Activated naive CD4-positive, alpha-beta T cell treated with anti-CD3 and anti-CD28 coated beads, Interleukin-2, amount 10 ng/mL, durations not matched to agents 7 days and 5 days (primary cell): ENCODE measurements at regions of chr1 and their contacts with region 1.

Region 1: GRCh38 chr1:160837558-160838205 is 25.0 kb downstream of the CD244 start:
- DNase-seq: peak; percentile 93
- H3K4me3 Mint-ChIP-seq: peak overlapping the region; percentile 13
- H3K27ac Mint-ChIP-seq: peak overlapping the region; percentile 96
- H3K4me1 Mint-ChIP-seq: peaks cover 65% of the 10 kb centered on the region
- H3K27me3 Mint-ChIP-seq: peaks cover 12% of the 10 kb centered on the region

Region 2: DNA sequence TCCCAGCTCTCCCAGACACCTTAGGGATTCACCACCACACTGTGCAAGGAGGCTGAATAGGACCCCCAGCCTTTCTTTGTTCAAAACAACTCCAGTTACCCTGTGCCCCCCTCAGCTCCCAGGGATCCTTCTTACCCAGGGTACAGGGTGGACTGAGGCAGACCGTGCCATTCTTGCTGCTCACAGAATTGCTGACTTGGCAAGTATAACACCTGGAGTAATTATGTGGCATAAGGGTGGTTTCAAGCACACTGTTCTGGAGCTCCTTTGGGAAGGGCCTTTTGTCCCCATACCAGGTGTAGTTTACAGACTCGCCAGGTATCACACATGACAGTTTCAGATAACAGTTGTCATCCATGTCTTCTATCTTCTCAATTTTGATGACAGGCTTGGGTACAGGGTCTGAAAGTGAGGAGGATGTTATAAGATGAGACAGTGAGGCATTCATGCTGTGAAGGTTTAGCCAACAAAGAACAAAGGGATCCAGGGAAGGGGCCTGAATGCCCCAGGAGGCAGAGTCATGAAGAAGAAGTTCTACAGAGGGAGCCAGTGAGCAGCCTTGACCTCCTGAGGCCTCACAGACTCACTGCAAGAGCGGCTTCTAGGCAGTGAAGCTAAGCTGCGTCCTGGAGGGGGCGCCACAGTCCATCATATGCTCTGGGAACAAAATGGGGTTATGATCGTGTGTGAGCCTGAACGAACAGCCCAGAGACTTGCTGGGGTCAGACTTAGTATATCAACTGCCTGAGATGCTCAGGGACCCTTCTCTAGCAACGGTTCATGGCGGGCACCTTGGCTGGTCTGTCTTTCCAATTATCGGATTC is 156.4 kb before region 1 on chr1:
- CTCF ChIA-PET with region 1: interaction called, 16 read pairs
- DNase-seq: peak; percentile 93
- H3K4me3 Mint-ChIP-seq: no peak overlapping the region
- H3K27ac Mint-ChIP-seq: peak overlapping the region; percentile 96
- H3K4me1 Mint-ChIP-seq: peaks cover 74% of the 10 kb centered on the region
- H3K27me3 Mint-ChIP-seq: no peaks in the 10 kb centered on the region

Region 3: GRCh38 chr1:160768295-160768657 is 69.4 kb before region 1 on chr1:
- CTCF ChIA-PET with region 1: interaction called, 37 read pairs
- DNase-seq: peak; percentile 93
- H3K4me3 Mint-ChIP-seq: peak overlapping the region; percentile 67
- H3K27ac Mint-ChIP-seq: peak overlapping the region; percentile 96
- H3K4me1 Mint-ChIP-seq: peaks cover 31% of the 10 kb centered on the region
- H3K27me3 Mint-ChIP-seq: no peaks in the 10 kb centered on the region

Region 4: DNA sequence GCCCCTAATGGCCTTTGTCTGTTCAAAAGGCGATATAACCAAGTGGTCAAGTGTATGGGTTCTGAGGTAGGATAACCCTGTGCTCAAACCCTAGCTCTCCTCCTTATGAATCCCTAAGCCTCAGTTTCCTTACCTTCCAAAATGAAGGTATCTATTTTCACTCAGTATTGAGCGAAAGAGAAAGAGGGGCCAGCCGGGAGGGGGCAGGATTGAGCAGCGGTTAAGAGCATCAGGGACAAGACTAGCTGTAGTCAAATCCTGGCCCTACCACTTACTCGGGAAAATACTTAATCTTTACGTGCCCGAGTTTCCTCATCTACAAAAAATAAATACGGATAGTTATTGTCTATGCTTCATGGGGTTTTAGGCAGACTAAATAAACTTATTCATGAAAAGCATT is 16.1 kb before region 1 on chr1:
- CTCF ChIA-PET with region 1: interaction called, 13 read pairs
- DNase-seq: no peak
- H3K4me3 Mint-ChIP-seq: no peak overlapping the region
- H3K27ac Mint-ChIP-seq: no peak overlapping the region
- H3K4me1 Mint-ChIP-seq: peaks cover 2% of the 10 kb centered on the region
- H3K27me3 Mint-ChIP-seq: no peaks in the 10 kb centered on the region

Region 5: DNA sequence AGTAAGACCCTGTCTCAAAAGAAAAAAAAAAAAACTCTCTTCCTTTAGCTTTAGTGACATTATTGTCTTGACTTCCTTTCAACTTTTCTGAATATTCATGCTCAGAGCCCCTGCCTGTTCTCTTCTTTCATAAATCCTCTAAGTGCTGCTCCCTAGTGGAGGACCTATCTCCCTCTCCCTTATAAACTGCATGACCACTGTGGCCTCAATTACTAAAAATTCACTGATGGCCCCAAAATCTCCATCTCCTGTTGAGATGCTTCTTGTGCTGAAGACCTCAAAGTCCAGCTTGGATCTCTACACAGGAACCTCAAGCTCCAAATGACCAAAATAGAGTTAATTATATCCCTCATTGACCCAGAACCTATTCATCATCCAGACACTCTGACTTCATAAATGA is 39.5 kb after region 1 on chr1:
- CTCF ChIA-PET with region 1: interaction called, 44 read pairs
- DNase-seq: peak; percentile 29
- H3K4me3 Mint-ChIP-seq: no peak overlapping the region
- H3K27ac Mint-ChIP-seq: no peak overlapping the region
- H3K4me1 Mint-ChIP-seq: peaks cover 5% of the 10 kb centered on the region
- H3K27me3 Mint-ChIP-seq: peaks cover 30% of the 10 kb centered on the region

Region 6: DNA sequence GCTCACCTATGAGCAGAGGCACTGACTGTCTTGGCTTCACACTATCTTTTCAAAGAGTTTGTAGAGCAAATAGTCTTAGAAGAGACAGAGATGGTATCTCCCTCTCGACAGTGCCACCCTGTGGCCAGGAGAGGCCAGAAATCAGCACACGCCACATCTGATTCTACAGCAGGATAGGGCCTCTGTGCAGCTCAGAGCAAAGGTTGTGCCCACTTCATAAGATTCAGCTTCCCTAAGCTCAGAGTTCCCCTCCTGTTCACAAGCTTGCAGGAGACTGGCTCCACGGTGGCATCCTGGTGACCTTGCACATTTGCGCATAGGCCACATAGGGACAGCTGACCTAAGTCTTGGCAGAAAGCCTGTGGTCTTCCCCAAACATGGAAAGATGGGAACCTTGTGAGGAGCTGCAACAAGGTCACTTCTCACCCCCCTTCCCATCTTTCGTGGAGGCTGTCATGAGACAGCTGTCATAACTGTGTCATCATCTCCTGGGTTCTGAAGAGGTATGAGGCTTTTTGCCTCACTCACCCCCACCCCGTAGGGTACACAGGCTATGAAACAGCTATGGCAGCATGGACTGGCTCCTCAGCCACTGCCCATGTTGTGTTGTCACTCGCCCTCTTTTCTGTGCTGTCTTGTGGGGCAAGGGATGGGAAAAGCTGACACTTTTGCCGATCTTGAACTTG is 113.9 kb after region 1 on chr1:
- CTCF ChIA-PET with region 1: interaction called, 288 read pairs
- DNase-seq: peak; percentile 86
- H3K4me3 Mint-ChIP-seq: no peak overlapping the region
- H3K27ac Mint-ChIP-seq: no peak overlapping the region
- H3K4me1 Mint-ChIP-seq: peaks cover 13% of the 10 kb centered on the region
- H3K27me3 Mint-ChIP-seq: peaks cover 10% of the 10 kb centered on the region